Heart left ventricle (tissue), 16 donors: ENCODE measurements at regions of chr7 and their contacts with region 1.

Region 1: DNA sequence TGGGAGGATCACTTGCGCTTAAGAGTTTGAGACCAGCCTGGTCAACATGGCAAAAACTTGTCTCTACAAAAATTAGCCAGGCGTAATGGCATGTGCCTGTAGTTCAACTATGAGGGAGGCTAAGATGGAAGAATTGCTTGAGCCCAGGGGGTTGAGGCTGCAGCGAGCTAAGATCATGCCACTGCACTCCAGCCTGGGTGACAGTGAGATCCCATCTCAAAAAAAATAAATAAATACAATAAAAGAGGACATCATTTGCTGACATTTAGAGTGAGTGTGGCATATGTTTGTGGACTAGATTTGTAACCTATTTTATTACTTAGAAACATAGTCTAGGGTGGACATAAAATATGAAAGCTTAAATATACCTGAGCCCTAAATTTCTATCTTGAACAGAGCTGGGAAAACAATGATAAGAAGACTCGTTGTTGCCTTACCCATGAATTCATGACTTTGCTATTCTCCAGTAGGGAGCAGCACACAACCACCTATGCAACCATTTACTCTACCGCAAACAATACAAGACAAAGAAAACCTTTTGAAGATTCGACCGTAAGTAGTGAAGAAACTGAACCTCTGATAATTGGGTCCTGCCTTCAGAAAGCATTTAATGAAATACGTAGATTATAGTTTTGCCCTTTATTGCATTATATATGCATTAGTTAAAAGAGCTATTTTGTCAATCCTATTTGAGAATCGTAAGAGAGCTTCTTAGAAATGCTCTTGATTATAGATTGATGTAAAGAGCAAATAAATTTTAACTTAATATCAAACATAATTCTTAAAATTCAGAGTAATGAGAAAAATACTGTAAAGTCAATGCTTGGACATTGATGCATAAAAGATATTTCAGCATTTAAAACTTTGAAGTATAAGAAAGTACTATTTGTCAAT is 83.5 kb downstream of the GNAT3 start:
- DNase-seq: peak in 2 of 5 donors; percentile 33 to 34
- ATAC-seq: peak; percentile 78 to 93 (median 89)
- H3K4me3 ChIP-seq: peak overlapping the region in 4 of 12 donors; percentile 14 to 39 (median 16)
- H3K27ac ChIP-seq: no peak overlapping the region
- H3K4me1 ChIP-seq: peaks cover 0 to 7% (median 0%) of the 10 kb centered on the region in 12 donors
- H3K27me3 ChIP-seq: no peaks in the 10 kb centered on the region
- CTCF ChIP-seq: peak; percentile 50 to 89 (median 78)
- POLR2A ChIP-seq: no peak

Region 2: GRCh38 chr7:79936281-79936983 is 492.0 kb before region 1 on chr7:
- intact Hi-C with region 1: no loop called
- DNase-seq: no peak
- ATAC-seq: no peak
- H3K4me3 ChIP-seq: no peak overlapping the region
- H3K27ac ChIP-seq: no peak overlapping the region
- H3K4me1 ChIP-seq: no peaks in the 10 kb centered on the region
- H3K27me3 ChIP-seq: peaks cover 0 to 5% (median 0%) of the 10 kb centered on the region in 9 donors
- CTCF ChIP-seq: no peak
- POLR2A ChIP-seq: no peak

Region 3: GRCh38 chr7:80294346-80294745 is 134.1 kb before region 1 on chr7:
- intact Hi-C with region 1: no loop called
- DNase-seq: no peak
- ATAC-seq: no peak
- H3K4me3 ChIP-seq: no peak overlapping the region
- H3K27ac ChIP-seq: no peak overlapping the region
- H3K4me1 ChIP-seq: no peaks in the 10 kb centered on the region
- H3K27me3 ChIP-seq: no peaks in the 10 kb centered on the region
- CTCF ChIP-seq: no peak
- POLR2A ChIP-seq: no peak

Region 4: DNA sequence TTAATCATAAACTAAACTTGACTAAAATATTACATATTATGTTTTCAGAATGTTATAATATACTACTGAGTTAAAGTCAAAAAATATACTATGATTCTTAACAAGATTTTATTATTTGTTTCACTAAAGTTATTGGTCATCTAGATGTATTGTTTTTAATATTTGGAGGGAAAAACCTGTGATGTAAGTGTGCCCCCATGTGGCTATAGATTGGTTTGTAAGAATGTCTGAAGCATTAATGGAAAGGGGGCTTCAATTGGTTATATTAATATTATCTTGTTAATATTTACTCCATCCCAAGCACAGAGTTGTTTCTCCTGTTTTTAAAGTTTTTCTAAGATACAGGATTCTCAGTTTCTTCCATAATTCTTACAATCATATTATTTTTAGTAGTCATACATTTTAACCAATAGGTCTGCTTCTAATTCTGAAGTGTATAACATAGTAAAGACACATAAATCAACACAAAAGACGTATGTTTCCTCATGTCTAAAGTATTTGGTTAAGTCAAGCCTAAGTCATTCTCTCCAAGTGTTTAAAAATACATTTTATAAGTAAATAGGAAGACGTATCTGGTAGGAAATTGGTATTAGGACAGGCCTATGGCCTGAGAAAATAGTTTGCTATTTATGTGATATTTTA is 25.4 kb after region 1 on chr7:
- intact Hi-C with region 1: loop called in 1 of 10 experiments (anchors 2 kb)
- DNase-seq: no peak
- ATAC-seq: no peak
- H3K4me3 ChIP-seq: no peak overlapping the region
- H3K27ac ChIP-seq: no peak overlapping the region
- H3K4me1 ChIP-seq: no peaks in the 10 kb centered on the region
- H3K27me3 ChIP-seq: no peaks in the 10 kb centered on the region
- CTCF ChIP-seq: peak in 11 of 12 donors; percentile 26 to 66 (median 53)
- POLR2A ChIP-seq: no peak

Region 5: GRCh38 chr7:80517282-80517747 is 88.9 kb after region 1 on chr7:
- intact Hi-C with region 1: loop called in 1 of 10 experiments (anchors 5 kb)
- DNase-seq: peak in 1 of 5 donors; percentile 31
- ATAC-seq: peak; percentile 64 to 78 (median 70)
- H3K4me3 ChIP-seq: no peak overlapping the region
- H3K27ac ChIP-seq: peak overlapping the region in 7 of 12 donors; percentile 0 to 63 (median 31)
- H3K4me1 ChIP-seq: peaks cover 0 to 18% (median 13%) of the 10 kb centered on the region in 12 donors
- H3K27me3 ChIP-seq: no peaks in the 10 kb centered on the region
- CTCF ChIP-seq: peak in 8 of 12 donors; percentile 14 to 59 (median 34)
- POLR2A ChIP-seq: no peak

Region 6: DNA sequence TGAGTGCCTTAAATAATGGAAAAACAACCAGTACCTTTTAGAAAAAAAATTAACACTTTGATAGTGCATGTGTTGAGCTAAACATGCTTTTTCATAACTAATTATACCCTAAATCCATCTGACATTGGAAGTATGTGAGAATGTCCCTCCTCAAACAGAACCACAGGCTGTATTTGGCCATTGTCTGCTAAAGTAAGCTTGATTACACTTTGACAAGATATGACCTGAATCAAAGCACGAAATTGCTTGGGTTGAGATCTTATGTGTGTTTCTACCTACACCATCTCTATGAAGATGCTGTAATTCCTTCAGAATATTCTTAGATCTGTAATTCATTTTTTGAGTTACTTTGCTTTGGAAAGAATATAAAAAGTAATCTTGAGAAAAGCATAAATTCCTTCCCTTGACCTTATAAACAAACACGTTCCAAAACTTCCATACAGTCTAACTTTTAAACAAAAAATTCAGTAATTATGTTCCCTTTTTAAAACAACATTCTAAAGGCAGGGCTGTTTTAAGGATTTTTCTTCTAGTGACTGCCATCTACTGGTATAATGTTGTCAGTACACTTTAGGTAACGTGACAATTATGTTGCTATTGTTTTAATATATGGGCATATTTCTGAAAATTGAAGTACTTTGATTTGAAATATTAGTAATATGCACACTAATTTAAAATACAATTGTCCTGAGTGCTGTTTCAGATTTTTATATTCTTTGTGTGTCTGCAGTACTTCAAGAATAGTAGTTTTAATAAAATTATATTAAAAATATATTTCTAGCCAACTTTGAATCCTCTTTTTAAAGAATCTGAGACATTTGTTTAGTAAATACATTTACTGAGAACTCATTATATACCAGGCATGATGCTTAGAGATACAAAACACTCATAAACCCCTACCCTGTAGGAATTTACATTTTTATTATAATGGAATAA is 231.0 kb after region 1 on chr7:
- intact Hi-C with region 1: loop called (anchors 1 to 5 kb)
- DNase-seq: no peak
- ATAC-seq: peak in 2 of 4 donors; percentile 41 to 45
- H3K4me3 ChIP-seq: no peak overlapping the region
- H3K27ac ChIP-seq: peak overlapping the region; percentile 11 to 65 (median 42)
- H3K4me1 ChIP-seq: peaks cover 4 to 76% (median 50%) of the 10 kb centered on the region in 12 donors
- H3K27me3 ChIP-seq: no peaks in the 10 kb centered on the region
- CTCF ChIP-seq: peak; percentile 49 to 89 (median 68)
- POLR2A ChIP-seq: no peak

Region 7: GRCh38 chr7:80681272-80681885 is 253.0 kb after region 1 on chr7:
- intact Hi-C with region 1: loop called in 6 of 10 experiments (anchors 2 to 5 kb)
- DNase-seq: no peak
- ATAC-seq: peak; percentile 67 to 71 (median 69)
- H3K4me3 ChIP-seq: no peak overlapping the region
- H3K27ac ChIP-seq: peak overlapping the region in 10 of 12 donors; percentile 11 to 65 (median 42)
- H3K4me1 ChIP-seq: peaks cover 0 to 29% (median 10%) of the 10 kb centered on the region in 12 donors
- H3K27me3 ChIP-seq: no peaks in the 10 kb centered on the region
- CTCF ChIP-seq: peak; percentile 35 to 64 (median 47)
- POLR2A ChIP-seq: no peak

Region 8: DNA sequence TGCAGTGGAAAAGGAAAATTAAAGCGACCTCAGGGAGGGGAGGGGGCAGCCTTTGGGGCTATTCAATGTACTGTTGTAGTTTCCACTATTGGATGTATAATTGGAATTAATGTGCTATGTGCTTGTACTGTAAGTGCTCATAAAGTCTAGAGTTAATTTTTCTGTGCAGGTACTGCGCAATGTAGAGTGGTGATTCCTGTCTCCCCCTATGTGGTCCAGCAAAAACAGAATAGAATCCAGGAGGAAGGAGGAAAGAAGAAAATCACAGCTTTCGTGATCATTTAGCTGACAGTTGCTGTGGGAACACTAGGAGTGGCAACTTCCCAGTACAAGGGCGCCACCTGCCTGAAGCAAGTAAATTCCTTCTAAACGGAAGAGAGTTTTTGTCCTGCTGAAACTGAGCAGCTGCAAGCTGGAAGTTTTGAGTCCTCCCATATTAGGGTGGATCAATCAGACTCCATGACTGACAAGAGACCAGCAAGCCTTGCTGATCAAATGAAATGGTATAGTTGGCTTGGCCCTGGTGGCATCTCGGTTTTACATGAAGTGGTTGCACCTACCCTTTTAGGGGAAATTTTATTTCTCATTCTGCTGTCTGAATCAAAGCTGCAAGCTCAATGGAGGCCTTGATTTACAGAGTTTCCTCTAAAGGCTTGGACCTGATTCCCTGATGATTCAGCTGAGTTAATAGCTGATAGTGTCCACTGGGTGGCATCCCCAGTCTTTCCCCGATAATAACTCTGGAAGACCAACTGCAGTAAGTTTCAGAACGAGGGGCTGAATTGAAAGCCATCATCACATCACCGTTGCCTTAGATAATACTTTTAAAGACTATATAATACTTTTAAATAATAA is 1041.7 kb after region 1 on chr7:
- intact Hi-C with region 1: loop called in 2 of 10 experiments (anchors 5 to 10 kb)
- DNase-seq: peak; percentile 63 to 76 (median 68)
- ATAC-seq: peak; percentile 75 to 92 (median 86)
- H3K4me3 ChIP-seq: peak overlapping the region in 3 of 12 donors; percentile 9 to 29 (median 9)
- H3K27ac ChIP-seq: peak overlapping the region in 2 of 12 donors; percentile 5 to 18
- H3K4me1 ChIP-seq: peaks cover 0 to 14% (median 0%) of the 10 kb centered on the region in 12 donors
- H3K27me3 ChIP-seq: no peaks in the 10 kb centered on the region
- CTCF ChIP-seq: peak; percentile 40 to 76 (median 64)
- POLR2A ChIP-seq: no peak